ENCODE measurements at regions of chr10 and their contacts with region 1.

Region 1: DNA sequence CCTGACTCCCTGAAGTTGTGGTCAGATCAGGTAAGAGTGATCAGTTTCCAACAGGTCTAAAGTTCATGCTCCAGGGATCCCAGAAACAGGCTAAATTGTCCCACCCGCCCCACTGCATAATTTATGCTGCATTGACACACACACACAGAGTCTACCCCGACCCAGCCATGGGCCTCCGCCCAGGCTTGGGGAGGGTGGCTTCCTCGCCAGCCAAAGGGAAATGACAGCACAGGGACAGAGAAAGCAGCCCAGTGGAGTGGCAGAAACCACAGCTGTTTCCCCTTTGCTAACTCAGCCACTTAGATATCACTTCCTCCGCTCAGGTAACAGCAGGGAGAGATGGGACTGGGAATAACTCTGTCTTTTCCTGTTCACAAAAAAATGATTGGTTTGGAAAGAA is 9.4 kb downstream of the SH3PXD2A start:
- DNase-seq: peak; percentile 71
- ATAC-seq: peak; percentile 86
- H3K4me3 Mint-ChIP-seq: no peak overlapping the region
- H3K27ac Mint-ChIP-seq: peak overlapping the region; percentile 53
- H3K4me1 Mint-ChIP-seq: peaks cover 19% of the 10 kb centered on the region
- H3K27me3 Mint-ChIP-seq: peaks cover 21% of the 10 kb centered on the region

Region 2: DNA sequence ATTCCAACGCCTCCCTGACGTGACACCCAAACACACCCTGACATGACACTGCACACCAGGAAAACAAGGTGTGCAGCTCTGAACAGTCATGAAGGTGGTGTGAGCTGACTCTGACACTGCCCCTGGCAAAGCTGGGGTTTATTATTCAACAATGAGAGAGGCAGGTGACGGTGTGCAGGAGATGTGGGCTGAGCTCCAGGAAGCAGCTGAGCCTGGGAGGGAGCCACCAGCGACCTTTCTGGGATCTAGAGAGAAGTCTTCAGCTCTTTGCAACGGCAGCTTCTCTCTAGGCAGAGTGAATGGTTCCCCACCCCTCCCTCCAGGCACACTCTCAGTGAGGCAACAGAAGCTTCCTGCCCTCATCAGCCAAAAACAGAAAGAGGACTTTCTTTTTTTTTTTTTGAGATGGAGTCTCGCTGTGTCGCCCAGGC is 56.2 kb before region 1 on chr10:
- CTCF ChIA-PET with region 1: no interaction called
- DNase-seq: no peak
- ATAC-seq: peak; percentile 27
- H3K4me3 Mint-ChIP-seq: no peak overlapping the region
- H3K27ac Mint-ChIP-seq: no peak overlapping the region
- H3K4me1 Mint-ChIP-seq: peaks cover 12% of the 10 kb centered on the region
- H3K27me3 Mint-ChIP-seq: peaks cover 11% of the 10 kb centered on the region

Region 3: GRCh38 chr10:103859161-103860086 is 13.5 kb after region 1 on chr10:
- CTCF ChIA-PET with region 1: interaction called, 33 read pairs
- DNase-seq: peak; percentile 78
- ATAC-seq: peak; percentile 70
- H3K4me3 Mint-ChIP-seq: no peak overlapping the region
- H3K27ac Mint-ChIP-seq: no peak overlapping the region
- H3K4me1 Mint-ChIP-seq: peaks cover 6% of the 10 kb centered on the region
- H3K27me3 Mint-ChIP-seq: peaks cover 28% of the 10 kb centered on the region

Region 4: GRCh38 chr10:103918053-103918846 is 72.3 kb after region 1 on chr10 and contains the start of gene STN1:
- CTCF ChIA-PET with region 1: no interaction called
- DNase-seq: peak; percentile 98
- ATAC-seq: peak; percentile 94
- H3K4me3 Mint-ChIP-seq: peak within 1 kb of the TSS; percentile 99
- H3K27ac Mint-ChIP-seq: peak within 1 kb of the TSS; percentile 96
- H3K4me1 Mint-ChIP-seq: peaks cover 31% of the 10 kb centered on the region
- H3K27me3 Mint-ChIP-seq: no peaks in the 10 kb centered on the region
- total RNA-seq, gene STN1: 37.5 to 52.0 TPM

Measured in activated CD8-positive, alpha-beta memory T cell treated with anti-CD3 and anti-CD28 coated beads, Interleukin-2, amount 10 ng/mL, durations not matched to agents 7 days and 5 days (primary cell).